WTC11 (cell line): ENCODE measurements at regions of chr16 and their contacts with region 1.

Region 1: DNA sequence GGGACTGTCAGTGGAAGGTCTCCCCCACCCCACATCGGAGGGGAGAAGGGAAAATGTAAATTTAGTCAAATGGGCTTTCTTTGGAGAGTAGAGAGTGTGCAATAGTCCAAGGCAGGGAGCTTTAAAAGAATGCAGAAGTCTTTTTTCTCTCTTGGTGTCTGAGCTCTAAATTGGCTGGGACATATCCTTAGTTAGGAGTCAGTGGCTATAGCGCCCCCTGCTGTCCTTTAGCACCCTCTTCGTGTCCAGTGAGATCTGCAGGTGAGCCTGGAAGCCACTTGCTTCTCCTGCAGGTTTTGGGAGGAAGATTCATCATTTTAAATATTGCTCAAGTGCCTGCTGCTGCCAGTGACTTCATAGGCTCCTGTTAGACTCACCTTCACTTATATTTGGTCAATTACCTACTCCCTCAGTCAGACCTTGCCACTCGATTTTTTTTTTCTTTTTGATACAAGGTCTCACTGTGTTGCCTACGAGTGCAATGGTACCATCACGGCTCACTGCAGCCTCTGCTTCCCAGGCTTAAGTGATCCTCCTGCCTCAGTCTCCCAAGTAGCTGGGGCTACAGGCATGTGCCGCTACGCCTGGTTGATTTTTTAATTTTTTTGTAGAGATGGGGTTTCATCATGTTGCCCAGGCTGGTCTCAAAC is 174.8 kb downstream of the PRKCB start:
- DNase-seq: peak; percentile 81
- ATAC-seq: peak; percentile 87
- H3K4me3 Mint-ChIP-seq: no peak overlapping the region
- H3K27ac Mint-ChIP-seq: no peak overlapping the region
- H3K4me1 Mint-ChIP-seq: 0 out of 2 replicates have a peak, but pooled peaks cover 3% of the 10 kb centered on the region
- H3K27me3 Mint-ChIP-seq: peaks cover 6% of the 10 kb centered on the region; the same call in 1 of the 2 replicates
- CTCF ChIP-seq: peak; percentile 89

Region 2: GRCh38 chr16:23754594-23755483 is 255.7 kb before region 1 on chr16 and contains the start of gene CHP2:
- CTCF ChIA-PET with region 1: interaction called, 13 read pairs
- POLR2A ChIA-PET with region 1: no interaction called
- DNase-seq: peak; percentile 45
- ATAC-seq: peak; percentile 77
- H3K4me3 Mint-ChIP-seq: peak within 1 kb of the TSS; percentile 63
- H3K27ac Mint-ChIP-seq: no peak within 1 kb of the TSS
- H3K4me1 Mint-ChIP-seq: 0 out of 2 replicates have a peak, but pooled peaks cover 5% of the 10 kb centered on the region
- H3K27me3 Mint-ChIP-seq: peaks cover 70% of the 10 kb centered on the region
- CTCF ChIP-seq: no peak
- total RNA-seq, gene CHP2: 2.1 to 4.7 TPM (median 4.6 TPM) in 3 replicates

Region 3: DNA sequence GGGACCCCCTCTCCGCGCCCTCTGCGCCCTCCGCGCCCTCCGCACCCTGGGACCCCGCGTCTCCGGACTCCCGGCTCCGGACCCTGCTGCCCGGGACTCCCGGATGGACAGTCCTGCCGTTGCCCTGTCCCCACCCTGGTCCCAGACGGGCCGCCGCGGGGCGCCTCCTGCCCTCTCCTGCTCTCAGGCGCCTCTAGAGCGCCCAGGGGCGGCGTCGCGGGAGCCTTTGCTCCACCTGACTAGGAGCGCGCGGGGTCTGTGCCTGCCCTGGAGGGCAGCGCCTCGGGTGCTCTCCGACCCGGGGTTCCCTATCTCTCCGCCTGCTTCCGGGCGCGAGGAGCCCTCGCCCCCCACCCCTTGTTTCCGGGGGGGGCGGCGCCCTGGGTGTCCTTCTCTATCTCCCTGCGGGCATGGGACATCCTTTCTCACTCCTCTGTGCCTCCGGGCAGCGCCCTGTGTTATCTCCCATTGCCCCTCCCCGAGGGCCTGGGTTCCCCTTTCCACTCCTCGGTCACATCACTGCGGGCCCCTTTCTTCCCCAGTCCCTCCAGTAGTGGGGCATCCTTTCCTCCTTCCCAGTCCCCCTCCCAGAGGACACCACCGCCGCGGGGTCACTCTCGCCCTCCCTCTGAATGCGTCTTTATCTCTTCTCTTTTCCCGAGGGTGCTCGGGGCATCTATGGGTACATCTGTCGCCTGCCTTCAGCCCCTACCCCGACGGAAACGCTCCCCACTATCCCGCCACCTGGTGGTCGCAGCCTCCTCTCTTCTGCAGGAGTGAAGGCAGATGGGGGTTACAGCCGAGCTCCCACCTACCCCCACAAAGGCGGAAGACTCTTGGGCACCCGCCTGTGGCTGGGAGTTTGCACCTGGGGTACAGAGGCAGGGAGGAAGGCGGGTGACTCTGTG is 173.9 kb before region 1 on chr16:
- CTCF ChIA-PET with region 1: interaction called, 13 read pairs
- POLR2A ChIA-PET with region 1: no interaction called
- DNase-seq: peak; percentile 74
- ATAC-seq: peak; percentile 38
- H3K4me3 Mint-ChIP-seq: peak overlapping the region; percentile 92
- H3K27ac Mint-ChIP-seq: no peak overlapping the region
- H3K4me1 Mint-ChIP-seq: peaks cover 30% of the 10 kb centered on the region
- H3K27me3 Mint-ChIP-seq: peaks cover 88% of the 10 kb centered on the region
- CTCF ChIP-seq: no peak; the same call in 1 of the 2 replicates

Region 4: GRCh38 chr16:23952128-23952970 is 58.2 kb before region 1 on chr16:
- CTCF ChIA-PET with region 1: interaction called, 13 read pairs
- POLR2A ChIA-PET with region 1: no interaction called
- DNase-seq: no peak
- ATAC-seq: peak; percentile 63
- H3K4me3 Mint-ChIP-seq: no peak overlapping the region
- H3K27ac Mint-ChIP-seq: no peak overlapping the region
- H3K4me1 Mint-ChIP-seq: peaks cover 15% of the 10 kb centered on the region
- H3K27me3 Mint-ChIP-seq: no peaks in the 10 kb centered on the region; the same call in 1 of the 2 replicates
- CTCF ChIP-seq: no peak

Region 5: DNA sequence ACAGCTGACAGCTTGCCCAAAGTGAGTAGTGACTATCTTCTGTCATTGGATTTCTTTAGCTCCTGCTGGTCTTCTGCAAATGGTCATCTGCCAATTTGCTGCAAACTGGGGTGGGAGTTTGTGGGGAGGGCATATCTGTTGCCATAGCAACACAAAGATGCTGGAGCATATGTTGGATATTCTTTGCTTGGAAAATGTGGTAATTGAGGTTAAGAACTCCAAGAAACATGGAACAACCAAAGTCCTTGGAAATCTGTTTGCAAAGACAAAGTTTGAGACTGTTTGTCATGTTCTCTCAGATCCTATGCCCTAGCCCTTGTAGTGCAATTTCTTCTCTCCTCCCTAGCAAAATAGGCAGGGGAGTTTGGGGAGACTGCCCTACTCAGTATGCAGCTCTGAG is 19.5 kb before region 1 on chr16:
- CTCF ChIA-PET with region 1: interaction called, 12 read pairs
- POLR2A ChIA-PET with region 1: no interaction called
- DNase-seq: no peak
- ATAC-seq: no peak
- H3K4me3 Mint-ChIP-seq: no peak overlapping the region
- H3K27ac Mint-ChIP-seq: no peak overlapping the region
- H3K4me1 Mint-ChIP-seq: peaks cover 6% of the 10 kb centered on the region
- H3K27me3 Mint-ChIP-seq: peaks cover 15% of the 10 kb centered on the region
- CTCF ChIP-seq: no peak

Region 6: DNA sequence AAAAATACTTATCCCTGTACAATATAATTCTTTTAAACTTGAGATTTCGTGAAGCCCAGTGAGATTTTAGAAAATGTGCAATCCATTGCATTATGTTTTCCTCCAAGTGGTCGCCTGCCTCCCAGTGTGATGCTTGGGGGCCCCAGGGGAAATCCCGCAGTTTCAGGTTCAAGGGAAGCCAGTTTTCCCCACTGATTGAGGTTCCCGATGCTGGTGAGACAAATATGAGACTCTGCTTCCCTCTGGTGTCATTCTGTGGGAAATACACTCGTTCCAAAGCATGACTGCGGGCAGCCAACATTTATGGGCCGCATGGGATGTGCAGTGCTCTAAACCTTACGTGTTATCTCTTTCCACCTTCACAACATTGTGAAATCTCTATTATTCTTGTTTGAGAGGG is 26.0 kb after region 1 on chr16:
- CTCF ChIA-PET with region 1: interaction called, 23 read pairs
- POLR2A ChIA-PET with region 1: no interaction called
- DNase-seq: peak; percentile 59
- ATAC-seq: peak; percentile 87
- H3K4me3 Mint-ChIP-seq: no peak overlapping the region
- H3K27ac Mint-ChIP-seq: no peak overlapping the region
- H3K4me1 Mint-ChIP-seq: peaks cover 2% of the 10 kb centered on the region; the same call in 1 of the 2 replicates
- H3K27me3 Mint-ChIP-seq: no peaks in the 10 kb centered on the region
- CTCF ChIP-seq: peak; percentile 67

Region 7: DNA sequence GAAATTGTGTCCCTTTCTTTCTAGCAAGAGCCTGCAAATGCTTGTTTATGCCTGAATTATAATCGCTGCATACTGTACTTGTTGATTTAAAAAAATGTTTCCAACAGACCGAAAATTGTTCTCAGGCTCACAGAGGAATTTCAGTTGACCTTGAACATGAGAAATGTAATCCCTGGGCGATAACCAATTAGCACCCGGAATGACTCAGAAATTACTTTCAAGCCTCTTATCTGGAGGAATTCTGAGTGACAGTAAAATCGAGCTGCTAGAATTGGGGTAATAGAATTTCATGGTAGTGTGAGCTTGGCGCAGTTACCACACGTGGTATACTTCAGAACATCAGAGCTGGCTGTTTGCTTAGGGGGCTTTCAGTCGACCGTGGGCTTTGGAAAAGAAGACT is 106.4 kb after region 1 on chr16:
- CTCF ChIA-PET with region 1: no interaction called
- POLR2A ChIA-PET with region 1: no interaction called
- DNase-seq: no peak
- ATAC-seq: no peak
- H3K4me3 Mint-ChIP-seq: no peak overlapping the region
- H3K27ac Mint-ChIP-seq: no peak overlapping the region
- H3K4me1 Mint-ChIP-seq: peaks cover 55% of the 10 kb centered on the region
- H3K27me3 Mint-ChIP-seq: no peaks in the 10 kb centered on the region; the same call in 1 of the 2 replicates
- CTCF ChIP-seq: no peak